WTC11 (cell line): ENCODE measurements at regions of chr19 and their contacts with region 1.

Region 1: DNA sequence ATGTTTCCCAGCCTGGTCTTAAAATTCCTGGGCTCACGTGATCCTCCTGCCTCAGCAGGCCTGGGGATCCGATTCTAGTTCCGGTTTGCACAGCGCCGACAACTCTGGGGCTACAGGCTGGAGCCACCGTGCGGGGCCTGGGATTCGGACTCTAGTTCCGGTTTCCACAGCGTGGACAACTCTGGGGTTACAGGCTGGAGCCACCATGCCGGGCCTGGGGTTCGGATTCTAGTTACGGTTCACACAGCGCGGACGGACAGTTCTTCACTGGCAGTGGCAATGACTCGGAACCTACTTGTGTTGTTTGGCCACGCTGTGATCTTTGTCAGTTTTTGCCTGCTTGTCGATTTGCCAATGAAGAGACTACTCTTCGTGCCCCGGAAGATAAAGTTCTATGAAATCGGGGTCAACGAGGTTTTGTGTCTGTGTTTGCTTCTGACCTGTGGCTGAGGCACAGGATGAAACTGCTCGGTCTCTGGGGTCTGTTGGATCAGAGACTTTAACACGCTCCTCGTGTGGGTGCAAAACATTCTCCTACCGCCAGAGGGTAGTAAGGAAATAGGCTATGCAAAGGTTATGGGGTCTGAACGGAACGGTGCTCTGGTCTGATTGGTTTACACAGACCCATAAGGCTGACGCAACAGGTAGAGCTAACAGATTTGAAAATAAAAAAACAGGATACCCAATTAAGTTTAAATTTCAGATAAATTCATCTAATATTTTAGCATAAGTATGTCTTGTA is 12.1 kb upstream of the ZSCAN1 start:
- DNase-seq: peak; percentile 84
- ATAC-seq: peak; percentile 99
- H3K4me3 Mint-ChIP-seq: no peak overlapping the region
- H3K27ac Mint-ChIP-seq: no peak overlapping the region; the same call in none of the 2 replicates
- H3K4me1 Mint-ChIP-seq: peaks cover 2% of the 10 kb centered on the region
- H3K27me3 Mint-ChIP-seq: peaks cover 28% of the 10 kb centered on the region
- CTCF ChIP-seq: peak; percentile 74

Region 2: GRCh38 chr19:58002384-58003173 is 19.1 kb before region 1 on chr19 and contains the start of gene ZNF606:
- CTCF ChIA-PET with region 1: interaction called, 12 read pairs
- POLR2A ChIA-PET with region 1: interaction called, 4 read pairs
- DNase-seq: peak; percentile 86
- ATAC-seq: peak; percentile 90
- H3K4me3 Mint-ChIP-seq: peak within 1 kb of the TSS; percentile 95
- H3K27ac Mint-ChIP-seq: peak within 1 kb of the TSS; percentile 91
- H3K4me1 Mint-ChIP-seq: peaks cover 22% of the 10 kb centered on the region
- H3K27me3 Mint-ChIP-seq: no peaks in the 10 kb centered on the region
- CTCF ChIP-seq: no peak
- total RNA-seq, gene ZNF606: 24.5 to 26.2 TPM (median 26.1 TPM) in 3 replicates

Region 3: GRCh38 chr19:58037927-58038687 is 16.4 kb after region 1 on chr19:
- CTCF ChIA-PET with region 1: interaction called, 16 read pairs
- POLR2A ChIA-PET with region 1: interaction called, 4 read pairs
- DNase-seq: peak; percentile 56
- ATAC-seq: peak; percentile 20
- H3K4me3 Mint-ChIP-seq: peak overlapping the region; percentile 57
- H3K27ac Mint-ChIP-seq: peak overlapping the region; percentile 95
- H3K4me1 Mint-ChIP-seq: peaks cover 32% of the 10 kb centered on the region
- H3K27me3 Mint-ChIP-seq: peaks cover 52% of the 10 kb centered on the region
- CTCF ChIP-seq: no peak

Region 4: GRCh38 chr19:58091251-58091995 is 69.7 kb after region 1 on chr19:
- CTCF ChIA-PET with region 1: interaction called, 10 read pairs
- POLR2A ChIA-PET with region 1: interaction called, 3 read pairs
- DNase-seq: no peak
- ATAC-seq: peak; percentile 77
- H3K4me3 Mint-ChIP-seq: no peak overlapping the region
- H3K27ac Mint-ChIP-seq: peak overlapping the region; percentile 88
- H3K4me1 Mint-ChIP-seq: peaks cover 6% of the 10 kb centered on the region
- H3K27me3 Mint-ChIP-seq: no peaks in the 10 kb centered on the region
- CTCF ChIP-seq: no peak

Region 5: GRCh38 chr19:58154679-58155648 is 133.3 kb after region 1 on chr19:
- CTCF ChIA-PET with region 1: interaction called, 31 read pairs
- POLR2A ChIA-PET with region 1: interaction called, 5 read pairs
- DNase-seq: peak; percentile 99
- ATAC-seq: peak; percentile 85
- H3K4me3 Mint-ChIP-seq: peak overlapping the region; percentile 93
- H3K27ac Mint-ChIP-seq: no peak overlapping the region
- H3K4me1 Mint-ChIP-seq: peaks cover 9% of the 10 kb centered on the region
- H3K27me3 Mint-ChIP-seq: peaks cover 25% of the 10 kb centered on the region
- CTCF ChIP-seq: peak; percentile 99